H1 (cell line): ENCODE measurements at regions of chr12 and their contacts with region 1.

Region 1: DNA sequence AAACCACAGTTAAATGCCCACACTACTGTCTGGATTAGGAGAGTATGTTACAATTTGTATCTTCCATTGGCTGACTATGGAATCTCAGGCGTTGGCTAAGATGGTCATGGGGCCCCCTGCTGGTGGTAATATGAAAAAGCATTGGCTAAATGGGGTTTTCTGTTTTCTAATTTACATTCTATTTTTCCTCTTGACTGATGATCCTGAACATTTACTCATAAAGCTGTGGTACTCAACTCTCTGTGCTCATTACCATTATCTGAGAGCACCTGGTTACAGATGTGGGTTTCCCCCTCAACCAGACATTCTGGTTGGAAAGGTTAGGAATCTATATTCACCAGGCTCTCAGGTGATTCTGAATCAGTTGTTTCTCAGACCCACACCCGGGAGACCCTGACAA is 64.8 kb downstream of the WSCD2 start:
- DNase-seq: peak in 1 of 2 experiments; percentile 56
- H3K4me3 ChIP-seq: no peak overlapping the region
- H3K27ac ChIP-seq: no peak overlapping the region
- H3K4me1 ChIP-seq: peaks cover 0 to 5% (median 0%) of the 10 kb centered on the region in 4 experiments; a peak in 4 of 7 replicates
- H3K27me3 ChIP-seq: no peaks in the 10 kb centered on the region
- CTCF ChIP-seq: peak in 2 of 3 experiments; percentile 68 to 77; a peak in 3 of 4 replicates
- EP300 ChIP-seq: no peak
- POLR2A ChIP-seq: no peak
- RAD21 ChIP-seq: peak; percentile 83 to 89

Region 2: DNA sequence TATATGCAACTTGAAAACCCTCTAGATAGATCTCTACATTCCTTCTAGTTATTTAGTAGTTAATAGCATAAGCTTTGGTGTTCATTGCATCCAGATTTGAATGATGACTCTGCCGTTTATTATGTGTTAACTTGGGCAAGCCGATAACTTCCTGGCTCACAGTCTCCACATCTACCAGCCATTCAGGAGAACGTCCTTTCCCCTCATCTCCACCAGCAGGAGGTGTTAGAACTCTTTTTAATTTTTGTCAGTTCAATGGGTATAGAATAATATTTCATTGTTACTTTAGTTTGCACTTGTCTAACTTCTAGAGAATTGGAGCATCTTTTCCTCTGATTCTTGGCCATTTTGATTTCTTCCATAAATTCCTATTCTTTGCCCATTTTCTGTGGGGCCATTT is 94.8 kb before region 1 on chr12:
- CTCF ChIA-PET with region 1: interaction called, 22 read pairs
- POLR2A ChIA-PET with region 1: no interaction called
- DNase-seq: no peak
- H3K4me3 ChIP-seq: no peak overlapping the region
- H3K27ac ChIP-seq: no peak overlapping the region
- H3K4me1 ChIP-seq: peaks cover 0 to 8% (median 0%) of the 10 kb centered on the region in 4 experiments; a peak in 1 of 7 replicates
- H3K27me3 ChIP-seq: no peaks in the 10 kb centered on the region
- CTCF ChIP-seq: peak; percentile 14 to 50 (median 28); a peak in 3 of 4 replicates
- EP300 ChIP-seq: no peak
- POLR2A ChIP-seq: no peak
- RAD21 ChIP-seq: peak; percentile 59 to 63

Region 3: DNA sequence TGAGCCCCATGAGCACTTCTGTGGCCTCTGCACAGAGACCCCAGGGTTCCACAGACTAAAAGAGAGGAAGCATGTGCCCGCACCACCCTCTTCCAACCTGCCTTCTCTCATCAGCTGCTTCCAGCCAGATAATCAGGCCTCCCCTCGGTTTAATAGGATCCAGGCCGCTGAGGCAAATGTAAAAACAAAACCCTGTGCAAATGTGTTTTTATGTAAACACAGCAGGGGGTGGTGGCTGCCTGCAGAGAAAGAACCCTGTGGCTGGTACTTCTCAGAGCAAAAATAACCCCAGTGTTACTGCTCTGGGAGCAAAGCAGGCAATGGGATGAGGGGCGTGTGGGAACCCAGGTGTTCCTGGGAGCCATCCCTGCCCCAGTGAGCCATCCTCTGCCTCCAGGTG is 18.6 kb before region 1 on chr12:
- CTCF ChIA-PET with region 1: interaction called, 18 read pairs
- POLR2A ChIA-PET with region 1: no interaction called
- DNase-seq: no peak
- H3K4me3 ChIP-seq: no peak overlapping the region
- H3K27ac ChIP-seq: no peak overlapping the region
- H3K4me1 ChIP-seq: peaks cover 3 to 18% (median 8%) of the 10 kb centered on the region in 4 experiments; a peak in 6 of 7 replicates
- H3K27me3 ChIP-seq: no peaks in the 10 kb centered on the region
- CTCF ChIP-seq: no peak
- EP300 ChIP-seq: no peak
- POLR2A ChIP-seq: no peak
- RAD21 ChIP-seq: no peak; a peak in 1 of 4 replicates

Region 4: GRCh38 chr12:108214486-108214885 is 20.6 kb after region 1 on chr12:
- CTCF ChIA-PET with region 1: interaction called, 28 read pairs
- POLR2A ChIA-PET with region 1: no interaction called
- DNase-seq: peak in 1 of 2 experiments; percentile 83
- H3K4me3 ChIP-seq: no peak overlapping the region
- H3K27ac ChIP-seq: no peak overlapping the region
- H3K4me1 ChIP-seq: peaks cover 0 to 12% (median 4%) of the 10 kb centered on the region in 4 experiments; a peak in 6 of 7 replicates
- H3K27me3 ChIP-seq: no peaks in the 10 kb centered on the region
- CTCF ChIP-seq: no peak
- EP300 ChIP-seq: no peak
- POLR2A ChIP-seq: no peak
- RAD21 ChIP-seq: 0 out of 4 replicates have a peak, but pooled peaks of 1 of the 2 experiments have one; percentile 6

Region 5: DNA sequence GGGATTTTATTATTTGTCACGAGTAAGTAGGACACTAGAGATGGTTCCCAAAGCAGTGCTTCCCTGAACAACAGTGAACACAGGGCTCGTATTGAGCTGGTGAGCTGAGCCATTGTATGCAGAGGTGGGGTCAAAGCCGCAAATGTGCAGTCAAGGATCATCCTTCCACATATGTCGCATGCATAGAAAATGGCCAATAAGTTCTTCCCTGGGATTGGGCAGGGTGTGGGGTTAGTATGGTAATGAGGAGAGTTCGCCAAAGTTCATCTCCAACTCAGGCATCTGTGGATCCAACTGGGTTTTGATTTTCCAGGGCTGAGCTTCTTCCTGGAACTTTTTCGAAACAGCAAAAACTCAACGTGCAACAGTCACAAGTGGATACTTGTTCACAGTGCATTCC is 58.6 kb after region 1 on chr12:
- CTCF ChIA-PET with region 1: no interaction called
- POLR2A ChIA-PET with region 1: no interaction called
- DNase-seq: no peak
- H3K4me3 ChIP-seq: no peak overlapping the region
- H3K27ac ChIP-seq: no peak overlapping the region
- H3K4me1 ChIP-seq: peaks cover 0 to 8% (median 4%) of the 10 kb centered on the region in 4 experiments; a peak in 3 of 7 replicates
- H3K27me3 ChIP-seq: no peaks in the 10 kb centered on the region
- CTCF ChIP-seq: no peak
- EP300 ChIP-seq: no peak
- POLR2A ChIP-seq: no peak
- RAD21 ChIP-seq: no peak